Dendritic cell treated with granulocyte-macrophage colony-stimulating factor and Interleukin-4, amounts not matched to agents 40 ng/mL and 50 ng/mL, for 4 days (primary cell): ENCODE measurements at regions of chr1 and their contacts with region 1.

Region 1: DNA sequence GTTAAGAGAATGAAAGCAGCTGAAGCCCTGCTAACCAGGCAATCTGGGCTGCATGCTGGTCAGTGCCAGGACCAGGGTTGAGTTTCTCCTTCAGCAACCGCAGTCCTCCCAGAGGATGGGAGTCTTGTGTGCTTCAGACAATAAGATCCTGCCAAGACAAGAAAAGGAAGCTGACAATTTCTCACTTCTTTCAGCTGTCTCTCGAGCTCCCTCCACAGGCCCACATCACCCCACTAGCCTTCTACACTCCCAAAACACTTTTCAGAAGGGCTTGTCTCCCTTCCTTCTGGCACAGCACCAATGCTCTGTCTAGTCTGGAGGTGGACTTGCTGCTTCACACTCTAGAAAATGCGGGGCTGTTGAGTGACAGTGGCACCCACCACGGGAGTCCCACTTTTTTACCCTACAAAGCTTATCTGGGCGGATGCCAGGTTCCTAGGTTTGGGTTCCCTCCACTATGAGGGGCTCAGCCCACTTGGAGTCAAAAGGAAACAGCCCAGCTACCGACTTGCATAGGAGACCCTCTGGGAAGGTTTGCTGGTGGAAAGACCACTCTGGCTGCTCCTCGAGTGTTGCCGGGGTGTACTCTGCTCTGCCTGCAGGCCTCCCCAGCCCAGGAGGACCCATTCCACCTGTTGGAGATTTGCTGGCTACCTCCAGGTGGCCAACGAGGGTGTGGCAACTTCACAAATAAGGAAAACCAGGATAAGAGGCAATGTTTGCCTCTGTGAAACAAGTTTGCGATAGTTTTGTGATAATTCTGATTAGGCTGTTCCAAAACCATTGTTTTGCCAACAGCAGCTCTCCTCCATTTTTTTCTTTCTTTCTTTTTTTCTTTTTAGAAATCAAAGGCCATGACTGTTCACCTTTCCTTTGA is 68.9 kb downstream of the TENT5C start:
- H3K4me3 Mint-ChIP-seq: no peak overlapping the region
- H3K27ac Mint-ChIP-seq: no peak overlapping the region
- H3K4me1 Mint-ChIP-seq: peaks cover 23% of the 10 kb centered on the region
- H3K27me3 Mint-ChIP-seq: no peaks in the 10 kb centered on the region

Region 2: GRCh38 chr1:117512743-117513321 is 161.9 kb before region 1 on chr1:
- intact Hi-C with region 1: loop called (anchors 5 kb)
- H3K4me3 Mint-ChIP-seq: no peak overlapping the region
- H3K27ac Mint-ChIP-seq: no peak overlapping the region
- H3K4me1 Mint-ChIP-seq: no peaks in the 10 kb centered on the region
- H3K27me3 Mint-ChIP-seq: no peaks in the 10 kb centered on the region

Region 3: DNA sequence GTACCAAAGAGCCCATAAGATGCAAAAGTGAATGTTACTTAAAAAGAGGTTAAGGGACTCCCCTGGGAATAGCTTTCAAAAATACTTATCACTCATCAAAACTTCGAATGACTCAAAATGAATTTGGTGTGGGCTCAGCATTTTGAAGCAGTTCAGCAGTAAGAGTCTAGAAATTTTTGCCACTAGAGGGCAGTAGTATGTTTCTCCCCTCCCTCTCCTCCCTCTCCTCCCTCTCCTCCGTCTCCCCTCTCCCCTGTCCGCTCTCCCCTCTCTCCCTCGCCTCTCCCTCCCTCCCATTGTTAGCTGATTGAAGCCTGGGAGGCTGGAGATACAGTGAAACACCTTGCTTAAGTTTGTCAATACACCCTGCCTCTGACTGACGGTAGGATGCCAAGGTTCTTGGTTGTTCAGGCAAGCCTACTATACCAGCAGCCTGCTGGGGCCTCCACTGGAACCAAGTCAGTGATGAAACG is 139.7 kb before region 1 on chr1:
- intact Hi-C with region 1: loop called (anchors 2 kb)
- H3K4me3 Mint-ChIP-seq: no peak overlapping the region
- H3K27ac Mint-ChIP-seq: no peak overlapping the region
- H3K4me1 Mint-ChIP-seq: no peaks in the 10 kb centered on the region
- H3K27me3 Mint-ChIP-seq: no peaks in the 10 kb centered on the region

Region 4: GRCh38 chr1:117644696-117645311 is 30.0 kb before region 1 on chr1:
- intact Hi-C with region 1: no loop called
- H3K4me3 Mint-ChIP-seq: no peak overlapping the region
- H3K27ac Mint-ChIP-seq: no peak overlapping the region
- H3K4me1 Mint-ChIP-seq: no peaks in the 10 kb centered on the region
- H3K27me3 Mint-ChIP-seq: peaks cover 4% of the 10 kb centered on the region

Region 5: GRCh38 chr1:117758444-117759316 is 83.9 kb after region 1 on chr1:
- intact Hi-C with region 1: loop called (anchors 10 kb)
- H3K4me3 Mint-ChIP-seq: peak overlapping the region; percentile 66
- H3K27ac Mint-ChIP-seq: no peak overlapping the region
- H3K4me1 Mint-ChIP-seq: peaks cover 10% of the 10 kb centered on the region
- H3K27me3 Mint-ChIP-seq: peaks cover 15% of the 10 kb centered on the region

Region 6: DNA sequence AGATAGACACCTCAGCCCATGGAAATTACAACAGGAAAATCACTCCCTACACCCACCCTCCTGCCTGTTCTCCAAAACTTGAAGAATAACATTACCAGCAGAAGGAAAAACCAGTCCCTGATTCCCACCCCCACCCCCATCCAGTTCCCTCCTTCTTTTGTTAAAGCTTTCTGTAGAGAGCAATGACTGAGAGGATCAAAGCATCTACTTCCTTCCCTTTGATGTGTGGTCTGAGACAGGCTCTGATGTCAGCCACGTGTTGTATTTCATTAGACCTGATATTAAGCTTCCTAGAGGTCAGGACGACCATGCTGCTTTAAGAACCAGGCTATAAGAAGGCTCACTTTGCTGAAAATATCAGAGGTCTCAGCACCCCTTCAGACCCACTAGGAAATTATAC is 1620.0 kb after region 1 on chr1:
- intact Hi-C with region 1: no loop called
- H3K4me3 Mint-ChIP-seq: no peak overlapping the region
- H3K27ac Mint-ChIP-seq: no peak overlapping the region
- H3K4me1 Mint-ChIP-seq: no peaks in the 10 kb centered on the region
- H3K27me3 Mint-ChIP-seq: peaks cover 3% of the 10 kb centered on the region